Activated naive CD8-positive, alpha-beta T cell treated with anti-CD3 and anti-CD28 coated beads, Interleukin-2, amount 10 ng/mL, durations not matched to agents 7 days and 5 days (primary cell): ENCODE measurements at regions of chr3 and their contacts with region 1.

Region 1: GRCh38 chr3:51498876-51499738 is 708 bp downstream of the DCAF1 start:
- DNase-seq: peak; percentile 85
- ATAC-seq: peak; percentile 71
- H3K4me3 Mint-ChIP-seq: peak overlapping the region; percentile 88
- H3K27ac Mint-ChIP-seq: peak overlapping the region; percentile 94
- H3K4me1 Mint-ChIP-seq: peaks cover 1% of the 10 kb centered on the region
- H3K27me3 Mint-ChIP-seq: no peaks in the 10 kb centered on the region

Region 2: DNA sequence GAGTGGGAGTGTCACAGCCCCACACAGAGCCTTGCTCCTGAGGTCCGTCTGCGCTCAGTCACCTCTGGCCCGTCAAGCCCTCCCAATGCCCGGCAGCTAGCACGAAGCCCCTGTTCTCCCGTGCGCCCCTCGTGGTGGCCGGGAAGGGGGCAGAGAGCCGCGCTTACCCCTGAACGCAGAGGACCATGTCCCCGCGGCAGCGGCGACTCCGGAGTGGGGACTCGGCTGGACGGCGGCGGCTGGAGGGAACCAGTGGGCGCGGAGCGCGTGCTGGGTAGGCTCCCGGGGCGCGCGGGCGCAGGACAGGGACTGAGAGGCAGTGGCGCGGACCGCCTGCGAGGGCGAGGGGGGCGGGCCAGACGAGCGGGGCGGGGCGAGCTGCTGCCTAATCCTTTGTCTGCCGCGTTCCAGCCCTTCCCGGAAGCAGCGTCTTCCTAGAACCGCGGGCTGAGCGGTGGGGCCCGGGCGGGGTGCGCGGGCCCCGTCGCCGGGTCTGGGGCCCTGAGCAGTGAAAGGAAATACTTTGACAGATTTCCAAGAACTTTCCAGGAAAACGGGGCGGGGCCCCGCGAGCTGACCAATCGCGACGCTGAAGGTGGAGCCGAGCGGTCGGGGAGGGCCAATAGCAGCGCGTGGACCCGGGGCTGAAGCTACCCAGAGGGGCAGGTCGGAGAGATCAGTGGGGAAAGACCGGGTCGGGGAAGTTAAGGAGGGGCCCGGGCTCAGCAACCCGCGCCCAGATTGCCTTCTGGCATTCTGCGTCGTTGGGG is 887.5 kb before region 1 on chr3 and contains the start of gene CISH:
- POLR2A ChIA-PET with region 1: interaction called, 15 read pairs
- DNase-seq: peak; percentile 98
- ATAC-seq: peak; percentile 63
- H3K4me3 Mint-ChIP-seq: peak within 1 kb of the TSS; percentile 97
- H3K27ac Mint-ChIP-seq: peak within 1 kb of the TSS; percentile 100
- H3K4me1 Mint-ChIP-seq: peaks cover 36% of the 10 kb centered on the region
- H3K27me3 Mint-ChIP-seq: no peaks in the 10 kb centered on the region
- total RNA-seq, gene CISH: 365 to 400 TPM

Region 3: DNA sequence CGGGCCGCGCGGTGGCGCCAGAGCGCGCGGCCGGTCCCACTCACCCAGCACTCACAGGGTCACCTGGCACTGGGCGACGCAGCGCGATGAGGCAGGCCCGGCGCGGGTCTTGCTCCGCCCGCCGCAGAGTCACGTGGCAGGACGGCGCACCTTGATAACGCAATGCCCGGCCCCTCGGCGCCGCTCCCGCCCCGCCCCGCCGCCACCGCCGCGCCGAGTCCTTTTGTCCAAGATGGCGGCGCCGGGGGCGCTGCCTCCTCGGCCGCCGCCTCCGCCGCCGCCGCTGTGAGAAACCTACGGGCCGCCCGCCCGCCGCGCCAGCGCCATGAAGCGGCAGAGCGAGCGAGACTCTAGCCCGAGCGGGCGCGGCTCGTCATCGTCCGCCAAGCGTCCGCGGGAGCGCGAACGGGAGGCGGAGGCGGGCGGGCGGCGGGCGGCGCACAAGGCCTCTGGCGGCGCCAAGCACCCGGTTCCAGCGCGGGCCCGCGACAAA is 108.0 kb before region 1 on chr3 and contains the start of gene RBM15B:
- POLR2A ChIA-PET with region 1: interaction called, 15 read pairs
- DNase-seq: peak; percentile 99
- ATAC-seq: peak; percentile 94
- H3K4me3 Mint-ChIP-seq: peak within 1 kb of the TSS; percentile 80
- H3K27ac Mint-ChIP-seq: peak within 1 kb of the TSS; percentile 88
- H3K4me1 Mint-ChIP-seq: peaks cover 42% of the 10 kb centered on the region
- H3K27me3 Mint-ChIP-seq: no peaks in the 10 kb centered on the region
- total RNA-seq, gene RBM15B: 30.5 to 32.6 TPM

Region 4: DNA sequence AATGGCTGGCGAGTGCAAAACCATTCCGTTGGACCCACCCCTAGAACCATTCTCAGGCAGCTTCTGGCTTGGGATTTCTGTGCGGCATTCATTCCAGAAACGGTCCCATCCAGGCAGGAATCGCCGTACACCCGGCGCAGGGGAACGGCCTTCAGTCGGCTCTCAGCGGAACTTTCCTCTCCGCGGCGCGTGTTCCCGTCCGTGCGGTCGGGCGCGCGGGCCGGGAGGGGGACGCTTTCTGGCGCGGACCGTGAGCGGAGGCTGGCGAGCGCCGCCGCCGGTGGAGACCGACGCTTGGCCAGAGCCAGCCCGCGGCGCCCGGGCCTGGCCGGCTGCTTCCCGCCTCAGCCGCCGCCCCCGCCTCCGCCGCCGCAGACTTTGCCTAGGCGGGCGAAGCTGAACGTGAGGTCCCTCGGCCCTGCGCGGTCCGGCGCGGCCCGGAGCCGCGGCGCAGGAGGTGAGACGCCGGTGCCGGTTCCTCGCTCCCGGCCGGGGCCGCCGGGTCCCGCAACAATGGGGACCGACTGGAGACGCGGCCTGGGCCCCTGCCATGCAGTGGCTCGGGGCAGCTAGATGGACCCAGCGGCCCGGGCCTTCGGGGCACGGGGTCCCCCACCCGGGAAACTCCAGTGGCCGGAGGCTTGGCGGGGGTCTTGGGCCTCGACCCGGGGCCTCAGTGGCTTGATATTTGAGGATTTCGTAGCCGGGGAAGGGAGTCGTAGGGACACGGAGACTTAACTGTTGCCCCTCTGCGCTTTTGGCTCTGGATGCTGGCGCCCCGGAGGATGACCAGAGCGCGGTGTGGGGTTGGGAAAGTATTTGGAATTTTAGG is 39.6 kb after region 1 on chr3 and contains the start of gene RAD54L2:
- POLR2A ChIA-PET with region 1: interaction called, 14 read pairs
- DNase-seq: peak; percentile 85
- ATAC-seq: peak; percentile 83
- H3K4me3 Mint-ChIP-seq: peak within 1 kb of the TSS; percentile 94
- H3K27ac Mint-ChIP-seq: peak within 1 kb of the TSS; percentile 86
- H3K4me1 Mint-ChIP-seq: peaks cover 25% of the 10 kb centered on the region
- H3K27me3 Mint-ChIP-seq: no peaks in the 10 kb centered on the region
- total RNA-seq, gene RAD54L2: 29.8 to 32.7 TPM

Region 5: GRCh38 chr3:51682079-51682478 is 183.0 kb after region 1 on chr3:
- POLR2A ChIA-PET with region 1: interaction called, 74 read pairs
- DNase-seq: peak; percentile 59
- ATAC-seq: peak; percentile 75
- H3K4me3 Mint-ChIP-seq: peak overlapping the region; percentile 74
- H3K27ac Mint-ChIP-seq: peak overlapping the region; percentile 84
- H3K4me1 Mint-ChIP-seq: peaks cover 65% of the 10 kb centered on the region
- H3K27me3 Mint-ChIP-seq: no peaks in the 10 kb centered on the region